ENCODE measurements at regions of chr7 and their contacts with region 1.

Region 1: GRCh38 chr7:80392229-80393169 is 119.4 kb downstream of the GNAT3 start:
- DNase-seq: no peak
- H3K4me3 ChIP-seq: no peak overlapping the region
- CTCF ChIP-seq: peak; percentile 25

Region 2: DNA sequence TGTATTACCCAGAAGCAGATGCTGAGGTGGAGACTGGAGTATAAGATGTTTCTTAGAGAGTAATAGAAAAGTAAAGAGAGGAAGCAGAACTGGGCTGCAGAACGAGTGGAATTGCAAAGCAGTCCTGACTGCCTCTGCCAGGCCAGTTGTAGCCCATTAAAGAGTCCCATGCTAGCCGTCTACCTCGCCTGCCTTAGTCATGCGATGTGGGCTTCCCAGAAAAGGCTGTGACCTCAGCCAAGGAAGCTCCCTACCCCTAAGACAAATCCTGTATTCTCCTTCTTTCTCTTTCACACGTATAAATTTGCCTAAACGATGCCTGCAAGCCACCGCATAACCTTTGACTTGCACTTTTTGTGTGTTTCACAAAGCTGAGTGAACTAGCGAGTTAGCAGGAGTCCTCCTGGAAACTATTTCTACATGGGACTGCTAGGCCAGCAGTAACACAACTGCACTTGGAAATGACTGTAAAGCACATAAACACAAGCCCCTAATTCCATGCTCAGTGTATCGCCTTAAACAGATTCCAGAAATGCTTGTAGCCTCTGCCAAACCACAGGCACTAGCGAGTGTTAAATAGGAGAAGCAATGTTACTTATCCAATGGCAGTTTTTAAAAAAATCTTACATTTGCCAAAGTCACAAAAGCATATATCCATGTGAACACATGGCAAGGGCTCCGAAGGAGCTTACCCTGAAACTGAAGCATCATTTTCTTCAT is 305.3 kb before region 1 on chr7:
- CTCF ChIA-PET with region 1: interaction called, 10 read pairs
- POLR2A ChIA-PET with region 1: no interaction called
- DNase-seq: peak; percentile 63
- H3K4me3 ChIP-seq: no peak overlapping the region
- CTCF ChIP-seq: no peak

Region 3: GRCh38 chr7:80095545-80095944 is 297.0 kb before region 1 on chr7:
- CTCF ChIA-PET with region 1: interaction called, 74 read pairs
- POLR2A ChIA-PET with region 1: no interaction called
- DNase-seq: no peak
- H3K4me3 ChIP-seq: no peak overlapping the region
- CTCF ChIP-seq: peak; percentile 9

Region 4: GRCh38 chr7:80134536-80135320 is 257.8 kb before region 1 on chr7 and contains the start of gene GNAI1:
- CTCF ChIA-PET with region 1: interaction called, 23 read pairs
- POLR2A ChIA-PET with region 1: interaction called, 3 read pairs
- DNase-seq: no peak
- H3K4me3 ChIP-seq: peak within 1 kb of the TSS; percentile 68
- CTCF ChIP-seq: peak; percentile 37

Region 5: DNA sequence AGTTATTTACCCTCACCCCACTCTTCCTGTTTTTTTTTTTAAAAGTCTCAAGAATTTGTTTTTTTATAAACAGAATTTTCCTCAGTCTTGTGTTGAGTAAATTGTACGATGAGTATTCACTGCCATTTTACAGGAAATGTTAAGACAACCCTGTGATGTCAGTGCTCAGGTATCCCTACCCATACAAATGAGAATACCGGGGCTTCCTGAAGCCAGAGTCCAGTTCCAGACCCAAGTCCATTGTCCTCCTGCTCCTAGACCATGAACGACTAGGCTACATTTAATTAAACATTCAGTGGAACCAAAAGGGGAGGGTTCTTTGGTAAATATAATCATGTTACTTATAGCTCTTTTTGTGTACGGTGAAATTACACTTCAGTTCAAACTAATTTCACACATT is 178.7 kb before region 1 on chr7:
- CTCF ChIA-PET with region 1: interaction called, 10 read pairs
- POLR2A ChIA-PET with region 1: no interaction called
- DNase-seq: no peak
- H3K4me3 ChIP-seq: no peak overlapping the region
- CTCF ChIP-seq: no peak

Region 6: GRCh38 chr7:80379034-80379982 is 13.2 kb before region 1 on chr7:
- CTCF ChIA-PET with region 1: interaction called, 39 read pairs
- POLR2A ChIA-PET with region 1: no interaction called
- DNase-seq: no peak
- H3K4me3 ChIP-seq: no peak overlapping the region
- CTCF ChIP-seq: no peak

Region 7: DNA sequence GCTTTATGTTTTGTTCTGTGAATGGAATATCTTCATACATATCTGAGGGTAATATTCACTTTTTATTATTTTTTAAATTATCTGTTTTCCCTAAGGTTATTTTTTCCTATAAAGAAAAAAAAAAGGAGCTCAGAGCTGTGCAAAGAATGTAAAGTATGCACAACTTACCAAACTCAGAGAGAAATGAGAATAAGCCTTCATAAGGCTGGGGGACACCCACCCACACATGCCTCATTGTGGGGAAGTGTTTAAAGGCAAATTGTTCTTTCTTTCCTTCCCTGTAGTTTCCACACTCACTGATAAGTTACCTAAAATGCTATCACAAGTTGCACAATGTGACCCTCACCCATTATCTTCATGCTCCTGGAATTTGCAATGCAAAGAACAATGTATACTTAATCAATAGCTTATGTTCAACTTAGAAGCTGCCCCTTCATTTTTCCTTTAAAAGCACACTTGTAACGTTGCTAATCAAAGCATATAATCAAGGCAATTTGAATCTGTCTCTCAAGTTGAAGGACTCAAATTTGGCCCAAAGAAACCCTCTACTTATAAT is 11.3 kb after region 1 on chr7:
- CTCF ChIA-PET with region 1: interaction called, 35 read pairs
- POLR2A ChIA-PET with region 1: no interaction called
- DNase-seq: no peak
- H3K4me3 ChIP-seq: no peak overlapping the region
- CTCF ChIP-seq: no peak

Region 8: DNA sequence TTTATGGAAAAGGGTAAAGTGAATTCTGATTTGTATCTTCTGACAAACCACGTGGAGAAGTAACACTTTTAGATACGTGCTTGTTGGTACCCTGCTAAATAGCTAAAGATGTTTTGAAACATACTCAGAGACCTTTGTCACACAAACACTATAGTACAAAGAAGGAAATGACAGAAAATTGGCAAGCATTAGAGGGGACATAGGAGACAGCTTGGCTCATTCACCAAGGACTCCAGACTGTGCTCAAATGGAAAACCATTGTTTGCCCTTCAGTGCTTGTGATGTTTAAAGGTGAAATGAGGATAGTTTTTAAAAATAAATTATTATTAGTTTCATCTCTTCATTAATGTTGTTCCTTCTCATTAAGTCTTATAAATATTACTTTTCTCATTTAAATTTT is 211.9 kb after region 1 on chr7:
- CTCF ChIA-PET with region 1: no interaction called
- POLR2A ChIA-PET with region 1: no interaction called
- DNase-seq: no peak
- H3K4me3 ChIP-seq: no peak overlapping the region
- CTCF ChIP-seq: no peak

Measured in AG04449 (cell line).